ENCODE measurements at regions of chr6 and their contacts with region 1.

Region 1: DNA sequence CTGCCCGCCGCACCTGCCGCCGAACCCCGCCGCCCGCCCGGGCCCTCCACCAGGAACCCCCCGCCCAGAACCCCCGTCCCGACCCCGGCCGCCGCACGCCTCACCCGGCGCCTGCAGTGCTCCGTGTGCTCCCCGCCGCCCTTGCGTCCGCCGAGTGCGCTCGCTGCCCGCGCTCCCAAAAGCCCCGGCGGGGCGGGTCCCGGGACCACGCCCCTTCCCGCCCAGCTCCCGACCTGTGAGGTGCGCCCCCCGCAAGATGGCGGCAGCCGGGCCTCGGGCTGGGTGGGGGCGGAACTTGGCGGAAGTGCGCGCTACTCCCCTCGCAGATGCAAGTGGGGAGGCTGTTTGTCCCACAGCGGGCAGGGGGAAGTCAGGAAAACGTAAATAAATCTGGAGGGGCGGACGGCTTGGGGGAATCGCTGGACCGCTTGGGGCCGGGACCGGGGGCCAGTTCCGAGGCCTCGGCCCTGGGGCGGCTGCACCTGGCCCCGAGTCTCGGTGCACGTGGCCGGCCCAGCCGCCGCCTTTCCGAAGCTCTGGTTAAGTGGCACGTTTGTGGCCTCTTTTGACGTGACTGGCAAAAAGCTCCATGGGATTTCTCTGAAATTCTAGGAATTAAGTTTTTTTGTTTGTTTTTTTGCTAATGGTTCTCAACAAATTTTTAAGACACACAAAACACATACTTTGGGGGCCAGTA is at the start of gene EZR:
- DNase-seq: peak; percentile 80 to 91
- ATAC-seq: peak; percentile 77
- H3K4me3 ChIP-seq: peak within 1 kb of the TSS; percentile 86 to 94
- H3K27ac ChIP-seq: peak within 1 kb of the TSS; percentile 34 to 50
- H3K4me1 ChIP-seq: no peaks in the 10 kb centered on the region
- H3K27me3 ChIP-seq: no peaks in the 10 kb centered on the region
- total RNA-seq, gene EZR: 44.8 to 56.2 TPM

Region 2: DNA sequence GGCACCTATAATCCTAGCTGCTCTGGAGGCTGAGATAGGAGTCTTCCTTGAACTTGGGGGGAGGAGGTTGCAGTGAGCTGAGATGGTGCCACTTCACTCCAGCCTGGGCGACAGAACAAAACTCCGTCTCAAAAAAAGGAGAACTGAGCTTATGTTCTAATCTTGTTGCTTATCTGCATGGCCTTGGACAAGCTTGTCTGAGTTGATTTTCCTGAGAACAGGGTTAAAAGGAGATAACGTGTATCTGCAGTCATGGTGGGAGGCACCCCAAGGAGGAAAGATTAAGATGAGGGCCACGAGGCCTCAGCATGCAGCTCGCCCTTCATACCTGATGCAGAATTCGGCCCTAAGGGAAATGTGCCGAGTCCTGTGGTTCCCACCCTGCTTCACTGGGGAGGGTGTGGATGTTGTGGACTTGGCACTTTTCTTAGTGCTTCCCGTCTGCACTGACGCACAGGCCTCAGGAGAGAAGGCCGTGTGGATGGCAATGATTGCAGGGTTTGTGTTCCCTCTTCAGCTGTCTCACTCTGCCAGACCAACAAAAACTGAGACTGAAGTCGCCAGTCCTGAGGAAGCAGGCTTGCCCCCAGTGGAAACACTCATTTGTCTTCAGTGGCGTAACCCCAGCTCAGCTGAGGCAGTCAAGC is 56.5 kb before region 1 on chr6:
- intact Hi-C with region 1: loop called in 1 of 2 experiments (anchors 2 kb)
- DNase-seq: no peak
- ATAC-seq: peak; percentile 13
- H3K4me3 ChIP-seq: no peak overlapping the region
- H3K27ac ChIP-seq: peak overlapping the region in 1 of 2 donors; percentile 28
- H3K4me1 ChIP-seq: no peaks in the 10 kb centered on the region
- H3K27me3 ChIP-seq: no peaks in the 10 kb centered on the region

Region 3: DNA sequence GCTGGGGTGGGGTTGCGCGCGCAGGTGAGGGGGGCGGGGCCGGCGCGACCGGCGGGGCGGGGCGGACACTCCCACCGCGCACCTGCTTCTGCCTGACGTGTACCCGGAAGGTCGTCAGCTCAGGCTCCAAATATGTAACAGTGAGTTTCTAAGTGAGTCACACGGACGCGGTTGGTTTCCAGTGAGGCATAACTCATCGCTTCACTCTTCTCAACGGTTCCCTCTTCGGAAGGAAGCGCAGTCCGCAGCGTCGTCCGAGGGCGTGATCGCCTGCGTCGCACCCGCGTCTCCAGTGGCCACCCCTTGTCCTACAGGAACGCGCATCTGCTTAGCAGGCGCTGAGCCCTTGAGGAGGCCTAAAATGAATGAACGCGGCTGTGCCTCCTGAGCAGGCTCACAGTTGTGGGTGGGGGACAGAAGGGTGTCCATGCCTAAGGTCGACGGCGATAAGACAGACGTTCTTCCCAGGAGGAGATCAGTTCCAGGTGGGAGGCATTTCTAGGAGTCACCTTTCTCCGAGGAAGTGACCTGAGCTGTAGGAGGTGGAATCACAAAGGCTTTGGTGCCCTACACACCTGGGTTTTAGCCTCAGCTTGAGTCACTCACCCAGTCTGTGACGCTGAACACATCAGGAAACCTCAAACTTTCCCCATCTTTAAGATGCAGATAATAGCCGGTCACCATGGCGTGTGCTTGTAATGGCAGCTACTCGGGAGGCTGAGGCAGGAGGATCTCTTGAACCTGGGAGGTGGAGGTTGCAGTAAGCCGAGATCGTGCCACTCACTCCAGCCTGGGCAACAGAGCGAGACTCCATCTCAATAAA is 50.7 kb after region 1 on chr6:
- intact Hi-C with region 1: loop called in 1 of 2 experiments (anchors 5 kb)
- DNase-seq: peak; percentile 84 to 89
- ATAC-seq: no peak
- H3K4me3 ChIP-seq: peak overlapping the region; percentile 37 to 46
- H3K27ac ChIP-seq: no peak overlapping the region
- H3K4me1 ChIP-seq: no peaks in the 10 kb centered on the region
- H3K27me3 ChIP-seq: no peaks in the 10 kb centered on the region

Measured in aorta (tissue), 5 donors.